ENCODE measurements at regions of chr4 and their contacts with region 1.

Region 1: GRCh38 chr4:85747882-85748491 is 273.0 kb downstream of the ARHGAP24 start:
- DNase-seq: no peak
- H3K4me3 ChIP-seq: no peak overlapping the region
- H3K27ac ChIP-seq: no peak overlapping the region
- H3K4me1 ChIP-seq: peaks cover 0 to 9% (median 0%) of the 10 kb centered on the region in 4 donors
- H3K27me3 ChIP-seq: no peaks in the 10 kb centered on the region
- CTCF ChIP-seq: peak; percentile 72 to 93 (median 76)
- EP300 ChIP-seq: no peak
- POLR2A ChIP-seq: no peak

Region 2: GRCh38 chr4:85084380-85085094 is 663.5 kb before region 1 on chr4:
- intact Hi-C with region 1: loop called (anchors 5 kb)
- DNase-seq: no peak
- H3K4me3 ChIP-seq: no peak overlapping the region
- H3K27ac ChIP-seq: no peak overlapping the region
- H3K4me1 ChIP-seq: no peaks in the 10 kb centered on the region
- H3K27me3 ChIP-seq: no peaks in the 10 kb centered on the region
- CTCF ChIP-seq: peak; percentile 58 to 75 (median 59)
- EP300 ChIP-seq: no peak
- POLR2A ChIP-seq: no peak

Region 3: GRCh38 chr4:85147439-85148076 is 600.4 kb before region 1 on chr4:
- intact Hi-C with region 1: loop called (anchors 2 kb)
- DNase-seq: no peak
- H3K4me3 ChIP-seq: peak overlapping the region in 1 of 4 donors; percentile 20
- H3K27ac ChIP-seq: no peak overlapping the region
- H3K4me1 ChIP-seq: peaks cover 0 to 8% (median 5%) of the 10 kb centered on the region in 4 donors
- H3K27me3 ChIP-seq: no peaks in the 10 kb centered on the region
- CTCF ChIP-seq: peak; percentile 53 to 64 (median 57)
- EP300 ChIP-seq: no peak
- POLR2A ChIP-seq: no peak